ENCODE measurements at regions of chr9 and their contacts with region 1.

Region 1: GRCh38 chr9:109469646-109470358 is 28.3 kb downstream of the PTPN3 start:
- DNase-seq: peak; percentile 30
- ATAC-seq: peak; percentile 99
- H3K4me3 ChIP-seq: no peak overlapping the region
- H3K27ac ChIP-seq: no peak overlapping the region
- H3K4me1 ChIP-seq: no peaks in the 10 kb centered on the region
- H3K27me3 ChIP-seq: no peaks in the 10 kb centered on the region
- CTCF ChIP-seq: peak; percentile 92 to 96 (median 94); a peak in 5 of 6 replicates
- EP300 ChIP-seq: no peak
- POLR2A ChIP-seq: no peak
- RAD21 ChIP-seq: peak; percentile 98

Region 2: DNA sequence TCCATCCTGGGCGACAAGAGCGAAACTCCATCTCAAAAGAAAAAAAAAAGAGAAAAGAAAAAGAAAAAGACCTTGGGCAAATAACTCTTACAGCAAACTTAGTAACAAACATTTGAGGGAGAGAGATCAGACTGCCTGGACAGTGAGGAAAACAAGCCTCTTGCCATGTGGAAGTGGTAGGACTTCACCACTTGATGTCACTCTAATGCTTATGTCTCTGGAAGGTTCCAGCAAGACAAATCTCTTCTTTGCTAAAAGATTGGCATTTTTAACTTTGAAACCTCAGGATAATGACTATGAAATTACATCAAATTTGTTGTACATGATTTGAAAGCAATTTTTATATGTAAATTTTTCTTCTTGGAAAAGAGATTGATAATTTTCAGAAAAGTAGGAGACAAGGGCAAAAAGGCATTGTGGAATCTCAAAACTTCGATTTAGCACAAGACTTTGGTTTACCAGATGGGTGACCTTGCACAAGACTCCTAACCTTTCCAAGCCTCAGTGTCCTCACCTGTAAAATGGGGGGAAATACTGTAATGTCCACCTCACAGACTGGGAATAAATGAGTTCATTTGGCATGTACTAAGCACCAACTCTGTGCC is 619.4 kb before region 1 on chr9:
- CTCF ChIA-PET with region 1: no interaction called
- POLR2A ChIA-PET with region 1: no interaction called
- RAD21 ChIA-PET with region 1: no interaction called
- SMC1A ChIA-PET with region 1: no interaction called
- in situ Hi-C with region 1: no loop called
- intact Hi-C with region 1: loop called (anchors 5 kb)
- DNase-seq: no peak
- ATAC-seq: peak; percentile 59
- H3K4me3 ChIP-seq: no peak overlapping the region
- H3K27ac ChIP-seq: no peak overlapping the region
- H3K4me1 ChIP-seq: no peaks in the 10 kb centered on the region
- H3K27me3 ChIP-seq: peaks cover 0 to 2% of the 10 kb centered on the region in 2 experiments; a peak in 2 of 4 replicates
- CTCF ChIP-seq: peak; percentile 40 to 51 (median 42); a peak in 4 of 6 replicates
- EP300 ChIP-seq: no peak
- POLR2A ChIP-seq: no peak
- RAD21 ChIP-seq: peak; percentile 61

Region 3: DNA sequence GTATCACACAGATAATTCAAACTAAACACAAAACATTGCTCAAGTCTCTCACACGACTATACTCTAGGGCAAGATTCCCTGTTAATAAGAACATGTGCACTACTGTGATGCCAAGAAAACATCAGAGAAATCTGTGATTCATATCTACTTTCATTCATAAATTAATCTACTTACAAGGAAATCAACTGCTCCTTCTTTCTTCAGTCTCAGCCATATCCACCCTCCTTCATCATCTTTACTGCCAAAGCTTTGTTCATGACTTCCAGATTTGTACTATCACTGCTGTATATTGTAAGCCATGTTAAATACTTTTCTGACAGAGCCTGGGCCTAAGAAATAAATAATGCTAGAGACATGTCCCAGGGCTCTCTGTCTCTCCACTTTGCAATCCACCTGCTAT is 491.6 kb before region 1 on chr9:
- CTCF ChIA-PET with region 1: no interaction called
- POLR2A ChIA-PET with region 1: no interaction called
- RAD21 ChIA-PET with region 1: no interaction called
- SMC1A ChIA-PET with region 1: no interaction called
- in situ Hi-C with region 1: no loop called
- intact Hi-C with region 1: no loop called
- DNase-seq: no peak
- ATAC-seq: no peak
- H3K4me3 ChIP-seq: no peak overlapping the region
- H3K27ac ChIP-seq: no peak overlapping the region
- H3K4me1 ChIP-seq: no peaks in the 10 kb centered on the region
- H3K27me3 ChIP-seq: no peaks in the 10 kb centered on the region
- CTCF ChIP-seq: no peak
- EP300 ChIP-seq: no peak
- POLR2A ChIP-seq: no peak
- RAD21 ChIP-seq: no peak

Region 4: DNA sequence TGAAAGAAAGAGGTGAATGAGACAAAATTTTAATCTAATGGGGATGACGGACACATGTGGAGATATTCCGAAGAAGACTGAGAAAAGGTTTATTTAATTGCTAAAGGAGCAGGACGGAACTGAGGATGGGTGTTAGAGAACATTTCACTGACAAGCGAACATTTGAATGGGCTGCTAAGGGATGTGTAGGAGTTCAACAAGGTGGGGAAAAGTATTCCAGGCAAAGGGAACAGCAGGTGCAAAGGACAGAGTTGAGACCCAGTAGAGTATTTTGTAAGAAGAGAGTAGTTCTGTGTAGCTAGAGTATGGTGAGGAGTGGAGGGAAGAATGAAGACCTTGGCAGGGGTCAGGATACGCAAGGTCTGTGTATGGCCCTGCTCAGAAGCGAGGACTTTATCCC is 255.4 kb before region 1 on chr9:
- CTCF ChIA-PET with region 1: no interaction called
- POLR2A ChIA-PET with region 1: no interaction called
- RAD21 ChIA-PET with region 1: no interaction called
- SMC1A ChIA-PET with region 1: no interaction called
- in situ Hi-C with region 1: no loop called
- intact Hi-C with region 1: no loop called
- DNase-seq: no peak
- ATAC-seq: no peak
- H3K4me3 ChIP-seq: no peak overlapping the region
- H3K27ac ChIP-seq: no peak overlapping the region
- H3K4me1 ChIP-seq: no peaks in the 10 kb centered on the region
- H3K27me3 ChIP-seq: no peaks in the 10 kb centered on the region; a peak in 1 of 4 replicates
- CTCF ChIP-seq: no peak
- EP300 ChIP-seq: no peak
- POLR2A ChIP-seq: no peak
- RAD21 ChIP-seq: no peak

Region 5: GRCh38 chr9:109244157-109245132 is 225.4 kb before region 1 on chr9:
- CTCF ChIA-PET with region 1: interaction called, 14 read pairs
- POLR2A ChIA-PET with region 1: no interaction called
- RAD21 ChIA-PET with region 1: interaction called, 8 read pairs
- SMC1A ChIA-PET with region 1: interaction called, 7 read pairs
- in situ Hi-C with region 1: loop called (anchors 10 kb)
- intact Hi-C with region 1: loop called (anchors 1 kb)
- DNase-seq: peak; percentile 25
- ATAC-seq: peak; percentile 98
- H3K4me3 ChIP-seq: no peak overlapping the region
- H3K27ac ChIP-seq: no peak overlapping the region
- H3K4me1 ChIP-seq: no peaks in the 10 kb centered on the region
- H3K27me3 ChIP-seq: peaks cover 0 to 2% of the 10 kb centered on the region in 2 experiments; a peak in 1 of 4 replicates
- CTCF ChIP-seq: peak; percentile 83 to 96 (median 95)
- EP300 ChIP-seq: no peak
- POLR2A ChIP-seq: no peak
- RAD21 ChIP-seq: peak; percentile 63

Region 6: DNA sequence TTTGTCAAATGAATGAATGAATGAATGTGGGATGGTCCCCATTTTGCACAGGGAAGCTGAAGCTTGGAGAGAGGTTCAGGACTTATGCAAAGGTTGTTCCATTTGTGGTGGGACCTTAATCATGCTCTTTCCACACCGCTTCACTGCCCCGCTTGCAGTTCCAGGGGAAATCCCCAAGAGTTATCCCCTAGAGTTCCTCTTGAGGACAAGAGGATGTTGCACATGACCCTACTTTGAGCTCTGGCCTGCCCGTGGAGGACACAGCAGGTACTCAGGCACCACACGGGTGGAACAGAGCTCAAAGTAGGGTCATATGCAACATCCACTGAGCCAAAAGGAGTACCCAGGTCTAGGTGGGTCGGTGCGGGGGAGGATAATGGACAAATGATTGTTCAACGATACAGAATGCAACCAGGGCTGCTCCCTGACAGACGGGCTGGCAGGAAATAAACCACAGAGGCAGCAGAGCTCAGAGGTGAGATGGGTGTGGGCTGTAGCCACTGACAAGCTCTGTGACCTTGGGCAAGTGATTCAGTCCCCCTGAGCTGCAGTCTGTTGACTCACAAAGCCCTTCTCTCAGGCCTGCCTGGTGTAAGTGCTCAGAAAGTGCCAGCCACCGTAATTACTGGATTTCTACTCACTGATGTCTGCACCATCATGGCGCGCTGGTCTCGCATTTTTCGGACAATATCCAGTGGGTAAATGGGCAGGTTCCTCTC is 88.6 kb before region 1 on chr9:
- CTCF ChIA-PET with region 1: interaction called, 10 read pairs
- POLR2A ChIA-PET with region 1: no interaction called
- RAD21 ChIA-PET with region 1: no interaction called
- SMC1A ChIA-PET with region 1: no interaction called
- in situ Hi-C with region 1: no loop called
- intact Hi-C with region 1: loop called (anchors 5 kb)
- DNase-seq: no peak
- ATAC-seq: peak; percentile 77
- H3K4me3 ChIP-seq: no peak overlapping the region
- H3K27ac ChIP-seq: no peak overlapping the region
- H3K4me1 ChIP-seq: peaks cover 36% of the 10 kb centered on the region
- H3K27me3 ChIP-seq: peaks cover 0 to 2% of the 10 kb centered on the region in 2 experiments; a peak in 1 of 4 replicates
- CTCF ChIP-seq: no peak
- EP300 ChIP-seq: no peak
- POLR2A ChIP-seq: no peak
- RAD21 ChIP-seq: no peak

Region 7: DNA sequence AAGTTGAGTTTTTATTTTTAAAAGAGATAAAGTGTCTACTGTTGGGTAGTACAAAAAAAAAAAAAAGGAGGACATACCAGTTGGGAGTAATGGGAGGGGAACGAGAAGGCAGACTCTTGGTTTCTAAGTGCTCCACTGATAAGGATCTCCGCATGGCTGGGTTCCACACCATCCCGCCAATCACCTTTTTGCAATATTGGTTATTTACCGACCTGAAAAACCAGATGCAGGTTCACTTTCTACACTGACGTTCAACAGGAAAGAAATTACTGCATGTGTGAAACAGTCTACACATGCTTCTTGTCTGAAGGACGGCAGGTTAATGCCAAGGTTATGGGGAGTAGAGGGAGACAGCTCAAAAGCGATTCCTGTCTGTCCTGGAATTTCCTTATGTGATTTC is 47.2 kb before region 1 on chr9:
- CTCF ChIA-PET with region 1: interaction called, 10 read pairs
- POLR2A ChIA-PET with region 1: interaction called, 3 read pairs
- RAD21 ChIA-PET with region 1: interaction called, 6 read pairs
- SMC1A ChIA-PET with region 1: interaction called, 10 read pairs
- in situ Hi-C with region 1: no loop called
- intact Hi-C with region 1: loop called (anchors 5 kb)
- DNase-seq: peak; percentile 91
- ATAC-seq: peak; percentile 83
- H3K4me3 ChIP-seq: no peak overlapping the region
- H3K27ac ChIP-seq: peak overlapping the region; percentile 23; the same call in 1 of the 2 replicates
- H3K4me1 ChIP-seq: peaks cover 44% of the 10 kb centered on the region
- H3K27me3 ChIP-seq: no peaks in the 10 kb centered on the region
- CTCF ChIP-seq: no peak
- EP300 ChIP-seq: peak; percentile 63 to 68; a peak in 3 of 4 replicates
- POLR2A ChIP-seq: no peak
- RAD21 ChIP-seq: no peak

Region 8: GRCh38 chr9:109453210-109453842 is 16.5 kb before region 1 on chr9:
- CTCF ChIA-PET with region 1: interaction called, 69 read pairs
- POLR2A ChIA-PET with region 1: interaction called, 3 read pairs
- RAD21 ChIA-PET with region 1: interaction called, 10 read pairs
- SMC1A ChIA-PET with region 1: interaction called, 34 read pairs
- in situ Hi-C with region 1: no loop called
- intact Hi-C with region 1: no loop called
- DNase-seq: no peak
- ATAC-seq: no peak
- H3K4me3 ChIP-seq: no peak overlapping the region
- H3K27ac ChIP-seq: no peak overlapping the region
- H3K4me1 ChIP-seq: no peaks in the 10 kb centered on the region
- H3K27me3 ChIP-seq: no peaks in the 10 kb centered on the region
- CTCF ChIP-seq: no peak
- EP300 ChIP-seq: no peak
- POLR2A ChIP-seq: no peak
- RAD21 ChIP-seq: no peak